Mammary epithelial cell (primary cell): ENCODE measurements at regions of chr2 and their contacts with region 1.

Region 1: DNA sequence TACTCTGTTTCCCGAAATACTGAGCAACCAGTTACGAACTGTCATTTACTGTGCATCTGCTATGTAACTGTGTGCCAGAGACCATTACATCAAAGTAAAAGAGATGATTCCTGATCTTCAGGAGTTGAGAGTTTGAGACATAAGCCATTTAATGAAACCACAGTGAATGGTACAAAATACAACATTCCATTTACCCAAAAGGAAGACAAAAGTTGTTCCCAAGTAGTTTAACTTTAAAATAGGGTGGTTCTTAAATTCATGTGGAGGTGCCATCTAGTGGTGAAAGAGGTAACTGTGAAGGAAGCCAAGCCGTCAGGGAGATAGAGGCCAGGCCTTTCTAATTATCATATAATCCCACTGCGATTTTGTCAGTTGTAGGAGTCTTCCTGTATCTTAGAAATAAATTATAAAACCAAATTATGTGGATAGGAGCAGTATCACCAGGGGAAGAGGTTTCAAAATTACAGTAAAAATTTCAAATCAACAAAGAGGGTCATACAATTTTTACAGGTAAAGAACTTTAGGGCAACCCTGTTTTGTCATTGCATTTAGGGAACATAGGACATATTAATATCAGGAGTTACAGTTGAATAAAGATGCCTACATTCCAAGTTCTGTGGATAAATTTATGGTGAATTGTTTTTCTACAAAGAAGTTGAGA is 67.7 kb downstream of the EPAS1 start:
- DNase-seq: peak; percentile 39
- H3K4me3 ChIP-seq: no peak overlapping the region
- H3K27ac ChIP-seq: no peak overlapping the region
- H3K4me1 ChIP-seq: no peaks in the 10 kb centered on the region
- H3K27me3 ChIP-seq: no peaks in the 10 kb centered on the region
- CTCF ChIP-seq: peak; percentile 71 to 82

Region 2: GRCh38 chr2:45643543-45644542 is 721.1 kb before region 1 on chr2:
- CTCF ChIA-PET with region 1: no interaction called
- dilution Hi-C with region 1: no loop called
- in situ Hi-C with region 1: no loop called
- intact Hi-C with region 1: loop called (anchors 5 kb)
- DNase-seq: peak; percentile 49
- H3K4me3 ChIP-seq: peak overlapping the region; percentile 48 to 65 (median 51)
- H3K27ac ChIP-seq: no peak overlapping the region
- H3K4me1 ChIP-seq: peaks cover 12% of the 10 kb centered on the region
- H3K27me3 ChIP-seq: peaks cover 2% of the 10 kb centered on the region
- CTCF ChIP-seq: peak; percentile 61 to 83

Region 3: GRCh38 chr2:45993476-45993991 is 371.4 kb before region 1 on chr2:
- CTCF ChIA-PET with region 1: no interaction called
- dilution Hi-C with region 1: no loop called
- in situ Hi-C with region 1: no loop called
- intact Hi-C with region 1: loop called (anchors 1 kb)
- DNase-seq: peak; percentile 58
- H3K4me3 ChIP-seq: no peak overlapping the region
- H3K27ac ChIP-seq: no peak overlapping the region
- H3K4me1 ChIP-seq: peaks cover 19% of the 10 kb centered on the region
- H3K27me3 ChIP-seq: no peaks in the 10 kb centered on the region
- CTCF ChIP-seq: peak; percentile 78 to 79

Region 4: GRCh38 chr2:46062637-46063412 is 302.1 kb before region 1 on chr2:
- CTCF ChIA-PET with region 1: no interaction called
- dilution Hi-C with region 1: no loop called
- in situ Hi-C with region 1: no loop called
- intact Hi-C with region 1: loop called (anchors 1 kb)
- DNase-seq: peak; percentile 53
- H3K4me3 ChIP-seq: no peak overlapping the region
- H3K27ac ChIP-seq: no peak overlapping the region
- H3K4me1 ChIP-seq: peaks cover 4% of the 10 kb centered on the region
- H3K27me3 ChIP-seq: no peaks in the 10 kb centered on the region
- CTCF ChIP-seq: peak; percentile 85 to 92

Region 5: GRCh38 chr2:46257476-46257875 is 107.5 kb before region 1 on chr2:
- CTCF ChIA-PET with region 1: no interaction called
- dilution Hi-C with region 1: loop called (anchors 5 kb)
- in situ Hi-C with region 1: no loop called
- intact Hi-C with region 1: no loop called
- DNase-seq: peak; percentile 25
- H3K4me3 ChIP-seq: no peak overlapping the region
- H3K27ac ChIP-seq: no peak overlapping the region
- H3K4me1 ChIP-seq: peaks cover 9% of the 10 kb centered on the region
- H3K27me3 ChIP-seq: no peaks in the 10 kb centered on the region
- CTCF ChIP-seq: no peak

Region 6: GRCh38 chr2:46333912-46334311 is 31.0 kb before region 1 on chr2:
- CTCF ChIA-PET with region 1: interaction called, 5 read pairs
- dilution Hi-C with region 1: no loop called
- in situ Hi-C with region 1: no loop called
- intact Hi-C with region 1: loop called (anchors 1 kb)
- DNase-seq: no peak
- H3K4me3 ChIP-seq: no peak overlapping the region
- H3K27ac ChIP-seq: peak overlapping the region; percentile 93
- H3K4me1 ChIP-seq: peaks cover 90% of the 10 kb centered on the region
- H3K27me3 ChIP-seq: no peaks in the 10 kb centered on the region
- CTCF ChIP-seq: peak; percentile 3 to 22

Region 7: GRCh38 chr2:46434851-46435273 is 69.9 kb after region 1 on chr2:
- CTCF ChIA-PET with region 1: no interaction called
- dilution Hi-C with region 1: no loop called
- in situ Hi-C with region 1: no loop called
- intact Hi-C with region 1: no loop called
- DNase-seq: peak; percentile 89
- H3K4me3 ChIP-seq: no peak overlapping the region
- H3K27ac ChIP-seq: peak overlapping the region; percentile 12
- H3K4me1 ChIP-seq: peaks cover 23% of the 10 kb centered on the region
- H3K27me3 ChIP-seq: no peaks in the 10 kb centered on the region
- CTCF ChIP-seq: no peak

Region 8: DNA sequence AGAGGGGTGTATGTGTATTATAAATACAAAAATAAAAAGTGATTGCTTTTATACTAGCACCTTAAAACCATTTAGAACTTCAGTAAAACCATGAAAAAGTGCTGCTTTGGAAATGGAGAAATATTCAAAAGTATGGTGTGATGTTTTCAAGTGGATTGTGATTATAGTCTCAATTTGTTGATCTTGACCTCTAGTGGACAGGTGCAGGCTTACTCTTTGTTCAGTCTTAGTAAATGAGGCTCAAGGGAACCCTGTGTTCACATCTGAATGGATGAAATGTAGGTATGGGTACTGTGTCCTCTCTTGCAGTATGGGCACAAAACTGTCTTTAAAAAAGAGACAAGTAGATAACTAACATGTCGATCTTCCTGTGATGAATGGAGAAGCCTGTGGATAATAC is 404.9 kb after region 1 on chr2:
- CTCF ChIA-PET with region 1: no interaction called
- dilution Hi-C with region 1: no loop called
- in situ Hi-C with region 1: no loop called
- intact Hi-C with region 1: no loop called
- DNase-seq: no peak
- H3K4me3 ChIP-seq: no peak overlapping the region
- H3K27ac ChIP-seq: no peak overlapping the region
- H3K4me1 ChIP-seq: no peaks in the 10 kb centered on the region
- H3K27me3 ChIP-seq: no peaks in the 10 kb centered on the region
- CTCF ChIP-seq: peak; percentile 9 to 21